Lower leg skin (tissue), 4 donors: ENCODE measurements at regions of chr18 and their contacts with region 1.

Region 1: GRCh38 chr18:63025251-63026090 is 294.1 kb downstream of the BCL2 start:
- DNase-seq: peak in 1 of 2 donors; percentile 86
- H3K4me3 ChIP-seq: no peak overlapping the region
- CTCF ChIP-seq: no peak
- POLR2A ChIP-seq: no peak

Region 2: DNA sequence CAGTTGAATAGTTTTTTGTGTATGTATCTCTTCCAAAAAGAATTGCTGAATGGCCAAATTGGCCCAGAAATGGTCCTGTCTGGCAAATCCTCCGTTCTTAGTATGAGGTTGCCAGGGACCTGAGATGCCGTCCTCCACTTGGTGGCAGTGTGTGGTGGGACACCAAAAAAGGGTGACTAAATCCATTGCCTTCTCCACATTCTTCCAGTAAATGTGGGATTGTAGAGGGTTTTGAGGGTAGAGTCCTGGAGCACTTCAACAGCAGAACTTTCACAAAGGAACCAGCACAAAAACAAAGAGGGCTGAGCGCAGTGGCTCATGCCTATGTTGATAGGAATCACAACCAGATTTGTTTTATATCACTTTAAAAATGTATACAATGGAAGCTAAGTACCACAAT is 94.2 kb after region 1 on chr18:
- intact Hi-C with region 1: loop called (anchors 10 kb)
- DNase-seq: no peak
- H3K4me3 ChIP-seq: no peak overlapping the region
- CTCF ChIP-seq: no peak
- POLR2A ChIP-seq: no peak